Mammary epithelial cell (primary cell): ENCODE measurements at regions of chr22 and their contacts with region 1.

Region 1: DNA sequence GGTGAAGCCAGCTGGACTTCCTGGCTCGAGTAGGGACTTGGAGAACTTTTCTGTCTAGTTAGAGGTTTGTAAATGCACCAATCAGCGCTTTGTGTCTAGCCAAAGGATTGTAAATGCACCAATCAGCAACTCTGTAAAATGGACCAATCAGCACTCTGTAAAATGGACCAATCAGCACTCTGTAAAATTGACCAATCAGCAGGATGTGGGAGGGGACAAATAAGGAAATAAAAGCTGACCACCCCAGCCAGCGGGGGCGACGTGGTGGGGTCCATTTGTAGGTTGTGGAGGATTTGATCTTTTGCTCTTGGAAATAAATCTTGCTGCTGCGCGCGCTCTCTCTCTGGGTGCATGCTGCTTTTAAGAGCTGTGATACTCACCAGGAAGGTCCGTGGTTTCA is 202.9 kb downstream of the MIAT start:
- DNase-seq: no peak
- H3K4me3 ChIP-seq: no peak overlapping the region
- H3K27ac ChIP-seq: no peak overlapping the region
- H3K4me1 ChIP-seq: no peaks in the 10 kb centered on the region
- H3K27me3 ChIP-seq: no peaks in the 10 kb centered on the region
- CTCF ChIP-seq: no peak

Region 2: GRCh38 chr22:26822299-26822698 is 38.0 kb before region 1 on chr22:
- CTCF ChIA-PET with region 1: no interaction called
- dilution Hi-C with region 1: no loop called
- in situ Hi-C with region 1: no loop called
- intact Hi-C with region 1: no loop called
- DNase-seq: no peak
- H3K4me3 ChIP-seq: no peak overlapping the region
- H3K27ac ChIP-seq: no peak overlapping the region
- H3K4me1 ChIP-seq: no peaks in the 10 kb centered on the region
- H3K27me3 ChIP-seq: peaks cover 3% of the 10 kb centered on the region
- CTCF ChIP-seq: no peak

Region 3: GRCh38 chr22:26937213-26937612 is 76.9 kb after region 1 on chr22:
- CTCF ChIA-PET with region 1: no interaction called
- dilution Hi-C with region 1: loop called (anchors 5 kb)
- in situ Hi-C with region 1: no loop called
- intact Hi-C with region 1: no loop called
- DNase-seq: no peak
- H3K4me3 ChIP-seq: no peak overlapping the region
- H3K27ac ChIP-seq: no peak overlapping the region
- H3K4me1 ChIP-seq: no peaks in the 10 kb centered on the region
- H3K27me3 ChIP-seq: no peaks in the 10 kb centered on the region
- CTCF ChIP-seq: peak in 1 of 2 donors; percentile 5